ENCODE measurements at regions of chr6 and their contacts with region 1.

Region 1: GRCh38 chr6:116279260-116280063 is at the start of gene TSPYL1:
- DNase-seq: peak; percentile 96 to 98 (median 97)
- H3K4me3 ChIP-seq: peak within 1 kb of the TSS; percentile 95 to 97
- H3K4me3 Mint-ChIP-seq: peak within 1 kb of the TSS; percentile 96 to 100 (median 99)
- H3K27ac ChIP-seq: peak within 1 kb of the TSS; percentile 97
- H3K27ac Mint-ChIP-seq: peak within 1 kb of the TSS; percentile 99 to 100 (median 100)
- H3K4me1 ChIP-seq: peaks cover 51% of the 10 kb centered on the region
- H3K4me1 Mint-ChIP-seq: peaks cover 40 to 75% (median 51%) of the 10 kb centered on the region in 4 donors
- H3K27me3 ChIP-seq: no peaks in the 10 kb centered on the region
- H3K27me3 Mint-ChIP-seq: no peaks in the 10 kb centered on the region
- total RNA-seq, gene TSPYL1: 107 to 109 TPM

Region 2: GRCh38 chr6:115882174-115882573 is 397.3 kb before region 1 on chr6:
- CTCF ChIA-PET with region 1: no interaction called
- POLR2A ChIA-PET with region 1: no interaction called
- intact Hi-C with region 1: no loop called
- DNase-seq: no peak
- H3K4me3 ChIP-seq: no peak overlapping the region
- H3K4me3 Mint-ChIP-seq: no peak overlapping the region
- H3K27ac ChIP-seq: no peak overlapping the region
- H3K27ac Mint-ChIP-seq: no peak overlapping the region
- H3K4me1 ChIP-seq: no peaks in the 10 kb centered on the region
- H3K4me1 Mint-ChIP-seq: no peaks in the 10 kb centered on the region
- H3K27me3 ChIP-seq: no peaks in the 10 kb centered on the region
- H3K27me3 Mint-ChIP-seq: no peaks in the 10 kb centered on the region

Region 3: GRCh38 chr6:116100419-116101301 is 178.8 kb before region 1 on chr6 and contains the start of gene NT5DC1:
- CTCF ChIA-PET with region 1: no interaction called
- POLR2A ChIA-PET with region 1: interaction called, 26 read pairs
- intact Hi-C with region 1: loop called (anchors 1 kb)
- DNase-seq: peak; percentile 81 to 86 (median 84)
- H3K4me3 ChIP-seq: peak within 1 kb of the TSS; percentile 66 to 71
- H3K4me3 Mint-ChIP-seq: peak within 1 kb of the TSS; percentile 94 to 99 (median 98)
- H3K27ac ChIP-seq: peak within 1 kb of the TSS; percentile 86
- H3K27ac Mint-ChIP-seq: peak within 1 kb of the TSS; percentile 89 to 97 (median 93)
- H3K4me1 ChIP-seq: peaks cover 49% of the 10 kb centered on the region
- H3K4me1 Mint-ChIP-seq: peaks cover 44 to 57% (median 48%) of the 10 kb centered on the region in 4 donors
- H3K27me3 ChIP-seq: no peaks in the 10 kb centered on the region
- H3K27me3 Mint-ChIP-seq: no peaks in the 10 kb centered on the region
- total RNA-seq, gene NT5DC1: 50.5 to 51.9 TPM

Region 4: DNA sequence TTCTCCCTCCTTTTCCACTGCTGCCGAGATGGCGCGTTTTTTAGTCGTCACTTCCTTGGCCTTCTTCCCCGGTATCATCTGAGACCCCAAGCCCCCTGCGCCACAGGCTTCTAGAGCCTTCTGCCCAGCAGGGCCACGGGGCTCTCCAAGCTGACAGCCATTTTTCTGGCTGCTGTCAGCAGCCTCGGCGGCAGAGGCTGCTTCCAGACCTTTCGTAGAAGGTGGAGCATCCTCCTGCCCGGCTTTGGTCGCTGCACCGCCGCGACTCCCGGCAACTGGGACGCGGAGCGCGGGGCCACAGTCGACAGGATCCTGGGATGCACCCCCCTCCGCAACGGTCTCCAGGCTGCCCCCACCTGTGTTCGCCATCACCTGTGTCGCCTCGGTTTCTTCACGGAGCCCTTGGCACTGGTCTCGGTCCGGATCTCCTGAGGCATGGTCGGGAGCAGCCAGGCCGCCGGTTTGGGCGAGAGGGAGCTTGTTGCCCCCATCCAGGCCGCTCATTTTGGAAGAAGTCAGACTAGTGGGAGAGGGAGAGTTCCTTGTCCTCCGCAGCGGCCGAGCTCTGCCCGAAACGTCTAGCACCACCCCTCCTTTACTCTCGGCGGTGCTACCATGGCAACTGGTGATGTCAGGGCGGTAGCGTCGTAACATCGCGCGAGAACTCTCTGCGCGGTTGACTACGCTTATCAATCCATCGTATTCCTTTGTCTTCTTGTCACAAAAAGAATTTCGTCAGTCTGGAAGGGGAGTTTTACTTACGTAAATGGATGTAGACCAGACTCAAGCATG is 25.8 kb before region 1 on chr6 and contains the start of gene TSPYL4:
- CTCF ChIA-PET with region 1: interaction called, 4 read pairs
- POLR2A ChIA-PET with region 1: interaction called, 79 read pairs
- intact Hi-C with region 1: loop called (anchors 1 kb)
- DNase-seq: peak; percentile 91 to 96 (median 93)
- H3K4me3 ChIP-seq: peak within 1 kb of the TSS; percentile 66 to 96
- H3K4me3 Mint-ChIP-seq: no peak within 1 kb of the TSS
- H3K27ac ChIP-seq: peak within 1 kb of the TSS; percentile 97
- H3K27ac Mint-ChIP-seq: peak within 1 kb of the TSS in 1 of 7 donors; percentile 69
- H3K4me1 ChIP-seq: peaks cover 45% of the 10 kb centered on the region
- H3K4me1 Mint-ChIP-seq: peaks cover 3 to 32% (median 18%) of the 10 kb centered on the region in 4 donors
- H3K27me3 ChIP-seq: no peaks in the 10 kb centered on the region
- H3K27me3 Mint-ChIP-seq: no peaks in the 10 kb centered on the region
- total RNA-seq, gene TSPYL4: 22.3 to 23.0 TPM

Region 5: GRCh38 chr6:116371120-116371917 is 91.9 kb after region 1 on chr6:
- CTCF ChIA-PET with region 1: no interaction called
- POLR2A ChIA-PET with region 1: interaction called, 12 read pairs
- intact Hi-C with region 1: loop called (anchors 2 kb)
- DNase-seq: peak; percentile 24 to 43 (median 35)
- H3K4me3 ChIP-seq: peak overlapping the region; percentile 43 to 47
- H3K4me3 Mint-ChIP-seq: peak overlapping the region; percentile 81 to 95 (median 92)
- H3K27ac ChIP-seq: peak overlapping the region; percentile 44
- H3K27ac Mint-ChIP-seq: peak overlapping the region; percentile 54 to 91 (median 77)
- H3K4me1 ChIP-seq: peaks cover 18% of the 10 kb centered on the region
- H3K4me1 Mint-ChIP-seq: peaks cover 16 to 31% (median 18%) of the 10 kb centered on the region in 4 donors
- H3K27me3 ChIP-seq: no peaks in the 10 kb centered on the region
- H3K27me3 Mint-ChIP-seq: peaks cover 4 to 8% of the 10 kb centered on the region in 2 donors

Region 6: DNA sequence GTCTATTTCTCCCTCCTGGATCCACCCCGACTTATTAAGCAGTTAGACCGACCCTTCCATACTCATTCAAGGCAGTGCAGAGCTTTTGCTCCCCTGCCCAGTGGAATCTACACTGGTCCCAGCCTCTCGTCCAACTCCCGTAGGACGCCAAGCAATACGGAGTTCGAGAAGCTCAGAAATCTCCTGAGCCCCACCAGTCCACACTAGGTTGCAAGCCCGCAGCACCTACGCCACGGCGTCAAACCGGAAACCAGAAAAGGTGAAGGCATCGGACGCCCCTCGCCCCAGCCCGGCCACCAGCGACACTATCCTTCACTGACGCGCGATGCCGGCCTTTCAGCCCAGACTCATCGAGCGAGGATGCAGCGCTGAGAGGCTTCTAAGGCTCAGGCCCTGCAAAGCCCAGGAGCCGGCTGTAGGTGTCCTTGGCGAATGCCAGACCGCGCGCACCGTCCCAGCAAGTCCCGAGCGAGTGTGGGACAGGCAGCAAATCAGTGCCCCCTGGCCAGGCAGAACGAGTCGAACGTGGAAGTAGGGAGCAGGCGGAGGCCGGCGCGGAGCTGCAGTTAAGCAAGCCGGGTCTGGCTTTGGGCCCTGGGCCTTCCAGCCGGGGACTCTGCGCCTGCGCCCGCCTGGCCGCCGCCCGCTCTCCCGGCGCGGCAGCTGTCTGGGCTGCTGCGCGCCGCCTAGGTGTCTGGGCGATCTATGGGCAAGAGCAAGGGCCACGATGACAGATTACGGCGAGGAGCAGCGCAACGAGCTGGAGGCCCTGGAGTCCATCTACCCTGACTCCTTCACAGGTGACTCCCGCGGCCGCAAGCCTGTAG is 291.6 kb after region 1 on chr6 and contains the start of gene RWDD1:
- CTCF ChIA-PET with region 1: interaction called, 3 read pairs
- POLR2A ChIA-PET with region 1: interaction called, 114 read pairs
- intact Hi-C with region 1: loop called (anchors 1 kb)
- DNase-seq: peak; percentile 98 to 99 (median 99)
- H3K4me3 ChIP-seq: peak within 1 kb of the TSS; percentile 68 to 86
- H3K4me3 Mint-ChIP-seq: peak within 1 kb of the TSS; percentile 98 to 99 (median 99)
- H3K27ac ChIP-seq: peak within 1 kb of the TSS; percentile 96
- H3K27ac Mint-ChIP-seq: peak within 1 kb of the TSS; percentile 98 to 100 (median 99)
- H3K4me1 ChIP-seq: peaks cover 44% of the 10 kb centered on the region
- H3K4me1 Mint-ChIP-seq: peaks cover 22 to 57% (median 39%) of the 10 kb centered on the region in 4 donors
- H3K27me3 ChIP-seq: no peaks in the 10 kb centered on the region
- H3K27me3 Mint-ChIP-seq: no peaks in the 10 kb centered on the region
- total RNA-seq, gene RWDD1: 32.6 to 34.4 TPM

Measured in CD4-positive, alpha-beta memory T cell (primary cell).